ENCODE measurements at regions of chr22 and their contacts with region 1.

Region 1: GRCh38 chr22:17492247-17492646 is 71.1 kb upstream of the SLC25A18 start:
- H3K4me3 Mint-ChIP-seq: no peak overlapping the region
- H3K27ac Mint-ChIP-seq: no peak overlapping the region
- H3K4me1 Mint-ChIP-seq: peaks cover 25% of the 10 kb centered on the region
- H3K27me3 Mint-ChIP-seq: no peaks in the 10 kb centered on the region

Region 2: GRCh38 chr22:17266251-17266971 is 225.8 kb before region 1 on chr22:
- intact Hi-C with region 1: loop called (anchors 5 kb)
- H3K4me3 Mint-ChIP-seq: no peak overlapping the region
- H3K27ac Mint-ChIP-seq: no peak overlapping the region
- H3K4me1 Mint-ChIP-seq: peaks cover 50% of the 10 kb centered on the region
- H3K27me3 Mint-ChIP-seq: peaks cover 7% of the 10 kb centered on the region

Measured in dendritic cell treated with granulocyte-macrophage colony-stimulating factor and Interleukin-4, amounts not matched to agents 40 ng/mL and 50 ng/mL, for 4 days (primary cell).